Activated naive CD4-positive, alpha-beta T cell treated with anti-CD3 and anti-CD28 coated beads for 36 hours (primary cell): ENCODE measurements at regions of chr1 and their contacts with region 1.

Region 1: GRCh38 chr1:112955781-112956543 is at the start of gene SLC16A1:
- DNase-seq: peak; percentile 87
- H3K4me3 Mint-ChIP-seq: peak within 1 kb of the TSS; percentile 95
- H3K27ac Mint-ChIP-seq: peak within 1 kb of the TSS; percentile 97
- H3K4me1 Mint-ChIP-seq: peaks cover 61% of the 10 kb centered on the region
- H3K27me3 Mint-ChIP-seq: no peaks in the 10 kb centered on the region
- total RNA-seq, gene SLC16A1: 56.3 to 57.5 TPM

Region 2: GRCh38 chr1:112395821-112396652 is 559.9 kb before region 1 on chr1 and contains the start of gene CTTNBP2NL:
- CTCF ChIA-PET with region 1: no interaction called
- intact Hi-C with region 1: loop called (anchors 1 kb)
- DNase-seq: peak; percentile 84
- H3K4me3 Mint-ChIP-seq: peak within 1 kb of the TSS; percentile 90
- H3K27ac Mint-ChIP-seq: no peak within 1 kb of the TSS
- H3K4me1 Mint-ChIP-seq: peaks cover 23% of the 10 kb centered on the region
- H3K27me3 Mint-ChIP-seq: peaks cover 9% of the 10 kb centered on the region
- total RNA-seq, gene CTTNBP2NL: 1.0 to 1.4 TPM

Region 3: GRCh38 chr1:112706908-112707663 is 248.9 kb before region 1 on chr1 and contains the start of gene RHOC:
- CTCF ChIA-PET with region 1: no interaction called
- intact Hi-C with region 1: loop called (anchors 5 kb)
- DNase-seq: peak; percentile 80
- H3K4me3 Mint-ChIP-seq: peak within 1 kb of the TSS; percentile 69
- H3K27ac Mint-ChIP-seq: no peak within 1 kb of the TSS
- H3K4me1 Mint-ChIP-seq: peaks cover 36% of the 10 kb centered on the region
- H3K27me3 Mint-ChIP-seq: peaks cover 2% of the 10 kb centered on the region
- total RNA-seq, gene RHOC: 36.3 to 37.3 TPM

Region 4: DNA sequence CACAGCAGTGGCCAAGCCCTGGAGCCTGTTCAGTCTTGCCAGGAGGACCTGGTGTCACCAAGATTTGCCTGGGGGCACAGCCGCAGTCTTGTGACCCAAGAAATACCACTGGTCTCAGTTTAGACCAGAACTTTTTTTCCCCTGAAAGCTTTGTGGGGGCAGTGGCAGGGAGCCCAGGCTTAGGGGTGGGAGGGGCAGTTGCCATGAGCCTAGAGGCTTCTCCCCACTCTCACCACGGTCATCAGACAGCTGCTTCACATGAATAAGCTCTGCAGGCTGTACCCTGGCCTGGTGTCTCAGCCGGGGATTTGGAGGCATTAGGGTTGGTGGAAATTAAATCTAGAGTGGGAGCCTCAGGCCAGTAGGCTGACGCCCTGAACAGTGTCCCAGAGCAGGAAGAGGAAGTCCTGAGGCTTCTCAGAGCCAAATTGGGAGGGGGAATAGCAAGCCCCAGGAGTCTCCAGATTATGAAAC is 73.7 kb before region 1 on chr1:
- CTCF ChIA-PET with region 1: interaction called, 3 read pairs
- intact Hi-C with region 1: loop called (anchors 1 kb)
- DNase-seq: no peak
- H3K4me3 Mint-ChIP-seq: no peak overlapping the region
- H3K27ac Mint-ChIP-seq: no peak overlapping the region
- H3K4me1 Mint-ChIP-seq: no peaks in the 10 kb centered on the region
- H3K27me3 Mint-ChIP-seq: peaks cover 2% of the 10 kb centered on the region

Region 5: GRCh38 chr1:112971006-112971405 is 15.0 kb after region 1 on chr1:
- CTCF ChIA-PET with region 1: no interaction called
- intact Hi-C with region 1: no loop called
- DNase-seq: no peak
- H3K4me3 Mint-ChIP-seq: no peak overlapping the region
- H3K27ac Mint-ChIP-seq: no peak overlapping the region
- H3K4me1 Mint-ChIP-seq: peaks cover 3% of the 10 kb centered on the region
- H3K27me3 Mint-ChIP-seq: no peaks in the 10 kb centered on the region

Region 6: GRCh38 chr1:113042285-113043143 is 86.6 kb after region 1 on chr1:
- CTCF ChIA-PET with region 1: interaction called, 4 read pairs
- intact Hi-C with region 1: loop called (anchors 1 kb)
- DNase-seq: peak; percentile 65
- H3K4me3 Mint-ChIP-seq: no peak overlapping the region
- H3K27ac Mint-ChIP-seq: peak overlapping the region; percentile 73
- H3K4me1 Mint-ChIP-seq: peaks cover 26% of the 10 kb centered on the region
- H3K27me3 Mint-ChIP-seq: peaks cover 2% of the 10 kb centered on the region

Region 7: GRCh38 chr1:113759333-113760101 is 803.6 kb after region 1 on chr1 and contains the start of gene PHTF1:
- CTCF ChIA-PET with region 1: no interaction called
- intact Hi-C with region 1: loop called (anchors 2 kb)
- DNase-seq: peak; percentile 63
- H3K4me3 Mint-ChIP-seq: peak within 1 kb of the TSS; percentile 92
- H3K27ac Mint-ChIP-seq: peak within 1 kb of the TSS; percentile 96
- H3K4me1 Mint-ChIP-seq: peaks cover 14% of the 10 kb centered on the region
- H3K27me3 Mint-ChIP-seq: no peaks in the 10 kb centered on the region
- total RNA-seq, gene PHTF1: 5.4 to 6.3 TPM

Region 8: DNA sequence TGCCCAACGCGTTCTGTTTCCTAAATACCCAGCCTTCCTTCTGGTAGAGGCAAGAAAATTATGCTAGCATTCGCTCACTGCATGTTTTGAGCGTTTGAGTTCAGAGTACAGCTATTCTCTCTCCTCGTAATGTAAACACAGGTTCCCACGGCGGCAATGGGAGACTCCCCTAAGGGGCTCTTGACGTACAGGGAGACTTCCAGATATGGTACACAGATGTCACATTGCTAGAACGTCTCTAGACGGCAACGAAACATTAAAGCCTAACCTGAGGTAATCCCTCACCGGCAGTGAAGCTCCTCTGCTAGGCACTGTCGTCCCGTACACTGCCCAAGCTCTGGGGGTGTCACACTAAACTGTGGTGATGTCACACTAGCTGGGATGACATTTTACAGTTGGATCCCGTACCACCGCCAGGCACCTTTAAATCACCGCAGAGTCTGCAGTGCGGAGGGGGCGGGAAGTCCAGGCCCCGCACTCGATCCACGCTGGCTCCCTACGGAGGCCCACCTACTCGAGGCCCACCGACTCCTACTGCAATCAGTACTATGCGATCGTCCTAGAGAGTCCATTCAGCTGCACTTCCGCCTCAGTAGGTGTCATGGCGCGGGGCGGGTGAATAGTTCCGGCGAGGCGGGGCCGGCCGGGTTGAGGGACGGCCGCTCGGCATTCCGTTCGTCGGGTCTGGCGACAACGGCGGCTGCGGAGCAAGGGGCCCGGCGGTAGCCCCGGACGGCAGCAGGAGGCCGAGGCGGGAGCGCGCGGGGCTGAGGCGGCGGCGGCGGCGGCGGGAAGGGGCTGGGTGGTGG is 973.2 kb after region 1 on chr1 and contains the start of gene HIPK1:
- CTCF ChIA-PET with region 1: no interaction called
- intact Hi-C with region 1: loop called (anchors 2 kb)
- DNase-seq: peak; percentile 94
- H3K4me3 Mint-ChIP-seq: peak within 1 kb of the TSS; percentile 96
- H3K27ac Mint-ChIP-seq: peak within 1 kb of the TSS; percentile 99
- H3K4me1 Mint-ChIP-seq: peaks cover 40% of the 10 kb centered on the region
- H3K27me3 Mint-ChIP-seq: no peaks in the 10 kb centered on the region
- total RNA-seq, gene HIPK1: 47.7 to 51.0 TPM